MCF 10A (cell line): ENCODE measurements at regions of chr12 and their contacts with region 1.

Region 1: GRCh38 chr12:67268896-67269631 is at the start of gene CAND1:
- DNase-seq: peak; percentile 99
- H3K4me3 Mint-ChIP-seq: peak within 1 kb of the TSS; percentile 77
- H3K27ac Mint-ChIP-seq: peak within 1 kb of the TSS; percentile 99
- H3K4me1 Mint-ChIP-seq: peaks cover 14% of the 10 kb centered on the region
- H3K27me3 Mint-ChIP-seq: no peaks in the 10 kb centered on the region
- CTCF ChIP-seq: no peak
- total RNA-seq, gene CAND1: 149 and 160 TPM in 2 replicates

Region 2: GRCh38 chr12:67288561-67288960 is 19.5 kb after region 1 on chr12:
- CTCF ChIA-PET with region 1: no interaction called
- POLR2A ChIA-PET with region 1: interaction called, 17 read pairs
- intact Hi-C with region 1: no loop called
- DNase-seq: no peak
- H3K4me3 Mint-ChIP-seq: no peak overlapping the region
- H3K27ac Mint-ChIP-seq: no peak overlapping the region
- H3K4me1 Mint-ChIP-seq: no peaks in the 10 kb centered on the region
- H3K27me3 Mint-ChIP-seq: no peaks in the 10 kb centered on the region
- CTCF ChIP-seq: no peak

Region 3: DNA sequence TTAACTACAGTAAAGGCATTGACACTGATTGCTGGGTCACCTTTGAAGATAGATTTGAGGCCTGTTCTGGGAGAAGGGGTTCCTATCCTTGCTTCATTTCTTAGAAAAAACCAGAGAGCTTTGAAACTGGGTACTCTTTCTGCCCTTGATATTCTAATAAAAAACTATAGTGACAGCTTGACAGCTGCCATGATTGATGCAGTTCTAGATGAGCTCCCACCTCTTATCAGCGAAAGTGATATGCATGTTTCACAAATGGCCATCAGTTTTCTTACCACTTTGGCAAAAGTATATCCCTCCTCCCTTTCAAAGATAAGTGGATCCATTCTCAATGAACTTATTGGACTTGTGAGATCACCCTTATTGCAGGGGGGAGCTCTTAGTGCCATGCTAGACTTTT is 36.5 kb after region 1 on chr12:
- CTCF ChIA-PET with region 1: no interaction called
- POLR2A ChIA-PET with region 1: interaction called, 10 read pairs
- intact Hi-C with region 1: no loop called
- DNase-seq: no peak
- H3K4me3 Mint-ChIP-seq: no peak overlapping the region
- H3K27ac Mint-ChIP-seq: no peak overlapping the region
- H3K4me1 Mint-ChIP-seq: no peaks in the 10 kb centered on the region
- H3K27me3 Mint-ChIP-seq: no peaks in the 10 kb centered on the region
- CTCF ChIP-seq: no peak